Sigmoid colon (tissue), 7 donors: ENCODE measurements at regions of chr22 and their contacts with region 1.

Region 1: DNA sequence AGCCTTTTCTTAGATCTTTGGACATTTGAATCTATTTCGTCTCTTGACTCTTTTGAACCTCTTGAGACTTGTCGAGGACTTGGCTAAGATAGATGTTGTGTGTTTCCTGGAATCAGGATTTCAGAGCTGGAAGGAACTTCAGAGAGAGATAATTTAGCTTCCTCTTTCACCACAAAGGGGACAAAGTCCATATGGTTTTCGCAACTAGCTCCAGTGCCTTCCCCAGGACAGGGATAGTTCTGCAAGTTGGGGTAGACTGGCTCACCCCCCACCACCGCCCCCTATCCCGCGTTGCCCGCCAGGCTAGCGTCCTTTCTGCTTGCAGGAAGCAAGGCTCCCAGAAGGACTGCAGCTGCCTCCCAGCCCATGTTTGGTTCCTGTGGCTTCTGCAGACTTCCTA is 75.7 kb upstream of the MYO18B start:
- DNase-seq: peak; percentile 84
- H3K4me3 ChIP-seq: no peak overlapping the region
- H3K27ac ChIP-seq: no peak overlapping the region
- H3K4me1 ChIP-seq: peaks cover 0 to 25% (median 10%) of the 10 kb centered on the region in 4 donors
- H3K27me3 ChIP-seq: no peaks in the 10 kb centered on the region
- CTCF ChIP-seq: no peak
- EP300 ChIP-seq: no peak
- POLR2A ChIP-seq: no peak

Region 2: GRCh38 chr22:25623310-25623734 is 43.0 kb before region 1 on chr22:
- intact Hi-C with region 1: loop called (anchors 10 kb)
- DNase-seq: no peak
- H3K4me3 ChIP-seq: no peak overlapping the region
- H3K27ac ChIP-seq: no peak overlapping the region
- H3K4me1 ChIP-seq: peaks cover 0 to 21% (median 10%) of the 10 kb centered on the region in 4 donors
- H3K27me3 ChIP-seq: no peaks in the 10 kb centered on the region
- CTCF ChIP-seq: no peak
- EP300 ChIP-seq: no peak
- POLR2A ChIP-seq: no peak

Region 3: DNA sequence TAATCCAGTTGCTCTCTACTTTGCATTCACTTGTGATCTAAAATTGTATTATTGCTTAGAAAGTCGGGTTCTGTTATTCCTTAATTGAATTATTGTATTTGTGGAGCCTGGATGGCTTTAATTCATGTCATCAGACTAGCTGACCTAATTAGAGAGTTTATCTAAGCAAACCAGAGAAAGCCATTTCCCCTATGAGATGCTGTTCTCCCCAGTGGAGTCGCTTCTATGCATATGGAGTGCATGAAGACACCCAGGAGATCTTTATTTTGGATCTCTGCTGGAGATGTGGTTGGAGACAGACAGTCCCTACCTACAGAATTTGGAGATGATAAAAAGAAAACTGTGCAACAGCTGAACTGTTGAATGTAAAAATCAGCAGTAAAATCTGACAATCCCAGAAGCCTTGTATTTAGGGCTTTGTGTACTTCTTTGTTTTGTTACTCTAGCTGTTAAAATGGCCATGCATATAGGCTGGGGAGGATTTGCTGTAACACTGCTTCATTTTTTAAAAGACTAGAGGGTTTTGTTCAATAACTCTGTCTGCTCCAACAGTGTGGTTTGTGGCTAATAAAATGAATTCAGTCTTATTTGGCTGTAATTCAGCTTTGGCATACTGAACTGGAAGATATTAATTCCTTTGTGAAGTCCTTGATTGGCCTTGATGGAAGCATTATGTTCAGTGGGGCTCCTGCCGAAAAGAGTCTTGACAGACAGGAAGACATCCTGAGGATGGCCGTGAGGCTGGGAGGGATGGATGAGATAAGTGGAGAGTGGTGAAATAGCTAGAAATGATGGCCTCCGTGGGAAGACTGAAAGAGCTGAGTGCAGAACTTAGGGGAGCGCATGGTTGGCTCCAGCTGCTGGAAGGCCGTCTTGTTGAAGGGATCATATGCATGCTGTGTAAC is 30.7 kb after region 1 on chr22:
- intact Hi-C with region 1: no loop called
- DNase-seq: no peak
- H3K4me3 ChIP-seq: no peak overlapping the region
- H3K27ac ChIP-seq: no peak overlapping the region
- H3K4me1 ChIP-seq: peaks cover 0 to 8% (median 3%) of the 10 kb centered on the region in 4 donors
- H3K27me3 ChIP-seq: no peaks in the 10 kb centered on the region
- CTCF ChIP-seq: no peak
- EP300 ChIP-seq: no peak
- POLR2A ChIP-seq: no peak

Region 4: GRCh38 chr22:25709758-25710157 is 43.5 kb after region 1 on chr22:
- intact Hi-C with region 1: no loop called
- DNase-seq: no peak
- H3K4me3 ChIP-seq: no peak overlapping the region
- H3K27ac ChIP-seq: no peak overlapping the region
- H3K4me1 ChIP-seq: no peaks in the 10 kb centered on the region
- H3K27me3 ChIP-seq: no peaks in the 10 kb centered on the region
- CTCF ChIP-seq: no peak
- EP300 ChIP-seq: no peak
- POLR2A ChIP-seq: no peak